ENCODE measurements at regions of chr5 and their contacts with region 1.

Region 1: DNA sequence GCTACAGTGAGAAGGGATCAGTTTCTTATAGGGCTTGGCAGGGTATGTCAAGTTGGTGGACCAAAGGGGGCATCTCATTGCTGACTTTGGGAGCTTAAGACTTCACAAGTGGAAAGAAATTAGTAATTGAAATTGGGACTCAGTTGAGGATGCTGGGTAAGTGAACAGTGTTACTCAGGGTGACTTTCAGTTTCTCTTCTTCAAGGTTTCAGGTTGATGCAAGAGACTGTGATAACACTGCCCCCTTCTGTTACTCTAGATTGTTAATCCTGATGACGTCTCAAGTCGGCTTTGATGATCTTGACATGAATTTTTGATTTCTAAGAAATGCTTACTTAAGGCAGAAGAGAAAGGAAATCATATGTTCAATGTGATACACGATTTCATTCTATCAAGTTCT is 21.3 kb downstream of the KCTD16 start:
- DNase-seq: peak; percentile 50
- H3K4me3 Mint-ChIP-seq: no peak overlapping the region
- H3K27ac Mint-ChIP-seq: no peak overlapping the region
- H3K4me1 Mint-ChIP-seq: peaks cover 30% of the 10 kb centered on the region
- H3K27me3 Mint-ChIP-seq: no peaks in the 10 kb centered on the region

Region 2: DNA sequence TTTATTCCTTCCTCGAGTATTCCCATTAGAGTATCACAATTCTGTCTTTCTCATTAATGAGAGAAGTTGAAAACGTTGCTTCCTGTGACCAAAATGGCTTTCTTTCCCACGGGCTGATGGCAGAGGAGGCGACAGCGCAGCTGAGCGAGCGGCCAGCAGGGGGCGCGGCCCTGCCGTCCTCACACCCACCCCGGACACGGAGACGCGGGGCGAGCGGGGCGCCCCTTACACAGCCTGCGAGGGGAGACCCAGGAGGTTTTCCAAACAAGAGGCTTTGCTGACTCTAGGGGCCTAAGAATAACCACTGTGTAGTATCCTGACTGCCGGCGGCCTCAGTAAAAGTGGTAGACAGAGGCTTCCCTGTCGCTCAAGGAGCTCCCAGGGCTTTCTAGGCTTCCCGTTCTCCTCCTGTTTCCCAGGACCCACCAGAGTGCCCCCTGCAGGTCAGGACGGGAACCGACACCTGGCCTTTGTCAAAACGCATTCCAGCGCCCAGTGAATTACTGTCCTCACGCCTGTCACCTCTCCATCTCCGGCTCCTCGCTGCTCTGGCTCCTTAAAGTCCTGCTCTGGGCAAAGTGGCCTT is 1478.8 kb before region 1 on chr5:
- CTCF ChIA-PET with region 1: no interaction called
- intact Hi-C with region 1: loop called (anchors 10 kb)
- DNase-seq: peak; percentile 87
- H3K4me3 Mint-ChIP-seq: peak overlapping the region; percentile 71
- H3K27ac Mint-ChIP-seq: peak overlapping the region; percentile 3
- H3K4me1 Mint-ChIP-seq: peaks cover 3% of the 10 kb centered on the region
- H3K27me3 Mint-ChIP-seq: peaks cover 3% of the 10 kb centered on the region

Region 3: DNA sequence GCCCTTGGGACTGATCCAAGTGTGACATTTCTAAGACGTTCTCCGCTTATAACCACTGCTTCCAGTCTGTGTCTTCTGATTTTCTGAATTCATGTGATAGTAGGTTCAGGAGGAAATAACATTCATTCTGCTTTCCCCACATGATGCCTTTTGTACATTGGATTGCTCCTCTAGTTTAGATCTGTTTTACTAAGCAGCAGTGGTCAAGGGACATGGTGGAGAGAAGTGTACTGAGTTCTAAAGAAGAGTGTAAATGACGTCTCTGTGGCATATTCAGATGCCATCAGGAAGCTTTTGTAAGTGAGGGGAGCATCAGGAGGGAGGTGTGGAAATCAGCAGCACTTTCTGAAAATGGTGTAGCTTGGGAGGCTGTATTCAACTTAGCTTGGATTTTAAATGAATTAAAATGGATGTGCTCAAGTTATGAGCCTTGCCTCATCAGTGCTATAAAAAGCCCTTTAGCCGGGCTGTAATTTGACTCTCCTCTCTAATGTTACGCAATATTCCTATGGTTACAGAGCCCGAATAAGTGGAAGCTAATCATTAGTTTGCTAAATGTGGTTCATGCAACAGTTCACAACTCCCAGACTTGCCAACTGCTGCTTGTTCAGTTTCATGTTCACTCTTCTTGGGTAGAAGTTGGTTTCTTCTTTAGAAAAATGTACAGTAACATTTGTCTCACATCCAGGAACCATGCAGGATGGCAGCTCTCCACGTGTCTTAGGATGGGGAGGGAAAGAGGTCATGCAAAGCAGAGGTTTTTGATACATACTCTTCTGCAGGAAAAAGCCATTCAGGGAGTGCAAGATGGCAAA is 1140.5 kb before region 1 on chr5:
- CTCF ChIA-PET with region 1: no interaction called
- intact Hi-C with region 1: loop called (anchors 2 kb)
- DNase-seq: no peak
- H3K4me3 Mint-ChIP-seq: no peak overlapping the region
- H3K27ac Mint-ChIP-seq: no peak overlapping the region
- H3K4me1 Mint-ChIP-seq: peaks cover 67% of the 10 kb centered on the region
- H3K27me3 Mint-ChIP-seq: no peaks in the 10 kb centered on the region

Region 4: DNA sequence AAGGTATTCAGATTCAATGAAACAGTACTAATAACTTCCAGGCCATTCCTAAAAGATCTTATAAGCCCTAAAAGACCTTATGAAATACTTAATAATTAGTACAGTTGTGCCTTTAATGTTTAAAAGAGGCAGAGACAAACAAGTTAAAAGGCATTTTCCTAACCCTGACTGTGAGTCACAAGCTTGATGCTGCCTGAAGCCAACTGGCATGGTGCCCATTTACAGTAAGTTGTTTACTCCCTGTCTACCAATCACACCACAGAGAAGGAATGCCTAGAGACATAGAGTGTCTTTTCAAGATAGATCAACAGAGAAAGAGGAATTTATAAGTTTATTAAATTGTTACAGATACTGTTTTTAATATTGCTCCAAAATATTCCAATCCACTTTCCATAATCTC is 836.3 kb before region 1 on chr5:
- CTCF ChIA-PET with region 1: no interaction called
- intact Hi-C with region 1: loop called (anchors 5 kb)
- DNase-seq: peak; percentile 60
- H3K4me3 Mint-ChIP-seq: no peak overlapping the region
- H3K27ac Mint-ChIP-seq: no peak overlapping the region
- H3K4me1 Mint-ChIP-seq: peaks cover 71% of the 10 kb centered on the region
- H3K27me3 Mint-ChIP-seq: no peaks in the 10 kb centered on the region

Region 5: GRCh38 chr5:143605403-143606005 is 586.5 kb before region 1 on chr5:
- CTCF ChIA-PET with region 1: no interaction called
- intact Hi-C with region 1: loop called (anchors 1 kb)
- DNase-seq: peak; percentile 57
- H3K4me3 Mint-ChIP-seq: no peak overlapping the region
- H3K27ac Mint-ChIP-seq: peak overlapping the region; percentile 36
- H3K4me1 Mint-ChIP-seq: peaks cover 20% of the 10 kb centered on the region
- H3K27me3 Mint-ChIP-seq: peaks cover 19% of the 10 kb centered on the region

Region 6: GRCh38 chr5:143923634-143924255 is 268.3 kb before region 1 on chr5:
- CTCF ChIA-PET with region 1: no interaction called
- intact Hi-C with region 1: loop called (anchors 2 kb)
- DNase-seq: no peak
- H3K4me3 Mint-ChIP-seq: no peak overlapping the region
- H3K27ac Mint-ChIP-seq: no peak overlapping the region
- H3K4me1 Mint-ChIP-seq: peaks cover 10% of the 10 kb centered on the region
- H3K27me3 Mint-ChIP-seq: peaks cover 2% of the 10 kb centered on the region

Region 7: DNA sequence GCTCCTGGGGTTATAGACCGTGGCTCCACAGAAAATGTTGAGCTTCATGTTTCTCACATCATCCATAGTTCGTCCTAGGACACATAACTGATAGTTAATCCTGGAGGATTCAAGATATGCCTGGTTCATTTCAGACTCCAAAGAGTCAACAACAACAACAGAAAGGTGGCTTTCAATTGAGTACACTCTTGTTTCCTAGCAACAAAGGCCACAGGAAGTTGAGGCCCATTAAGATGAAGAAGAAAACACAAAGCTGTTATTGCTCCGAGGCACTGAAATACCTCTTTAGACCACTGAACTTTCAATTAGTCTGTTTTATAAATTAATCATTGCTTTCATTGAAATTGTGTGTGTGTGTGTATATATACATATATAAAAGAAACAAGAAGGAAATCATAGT is 176.0 kb before region 1 on chr5:
- CTCF ChIA-PET with region 1: no interaction called
- intact Hi-C with region 1: no loop called
- DNase-seq: no peak
- H3K4me3 Mint-ChIP-seq: no peak overlapping the region
- H3K27ac Mint-ChIP-seq: no peak overlapping the region
- H3K4me1 Mint-ChIP-seq: no peaks in the 10 kb centered on the region
- H3K27me3 Mint-ChIP-seq: no peaks in the 10 kb centered on the region

Region 8: DNA sequence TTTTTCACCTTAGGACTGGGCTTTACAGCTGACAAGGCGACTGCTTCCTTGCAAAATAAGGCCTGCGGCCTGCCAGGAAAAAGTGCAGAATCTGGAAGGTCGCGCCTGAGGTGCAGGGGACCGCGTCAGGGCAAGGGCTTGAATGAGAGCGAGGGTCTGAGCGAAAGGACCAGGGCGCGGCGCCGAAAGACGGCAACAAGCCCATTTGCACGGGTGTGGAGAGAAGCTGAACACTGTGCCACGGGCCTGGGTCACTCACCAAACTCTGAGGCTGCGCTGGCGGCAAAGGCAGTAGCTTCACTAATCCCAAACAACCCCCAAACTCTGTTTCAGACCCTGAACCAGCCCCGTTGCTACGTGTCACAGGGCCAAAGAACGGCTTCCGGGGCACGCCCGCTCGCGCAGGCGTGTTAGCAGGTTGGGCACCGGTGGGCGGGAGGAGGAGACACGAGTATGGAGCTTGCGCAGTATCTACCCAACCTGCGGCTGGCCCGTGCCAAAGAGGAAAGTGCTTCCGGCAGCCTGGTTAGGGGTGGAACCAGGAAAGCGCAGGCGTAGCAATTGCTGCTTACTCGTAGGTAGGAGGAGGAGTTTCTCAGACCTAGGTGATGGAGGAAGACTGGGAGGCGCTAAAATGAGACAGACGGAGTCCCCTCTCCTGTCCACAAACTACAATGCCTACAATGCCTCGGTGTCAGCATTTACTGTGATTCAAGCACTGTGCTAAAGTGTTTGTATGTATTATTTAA is 21.5 kb before region 1 on chr5 and contains the starts of genes KCTD16 and YIPF5:
- CTCF ChIA-PET with region 1: interaction called, 40 read pairs
- intact Hi-C with region 1: loop called (anchors 1 kb)
- DNase-seq: peak; percentile 98
- H3K4me3 Mint-ChIP-seq: peak within 1 kb of the TSS; percentile 91
- H3K27ac Mint-ChIP-seq: peak within 1 kb of the TSS; percentile 60
- H3K4me1 Mint-ChIP-seq: peaks cover 39% of the 10 kb centered on the region
- H3K27me3 Mint-ChIP-seq: no peaks in the 10 kb centered on the region
- total RNA-seq, gene KCTD16: 0.27 to 0.29 TPM
- total RNA-seq, gene YIPF5: 31.2 to 33.3 TPM

Region 9: DNA sequence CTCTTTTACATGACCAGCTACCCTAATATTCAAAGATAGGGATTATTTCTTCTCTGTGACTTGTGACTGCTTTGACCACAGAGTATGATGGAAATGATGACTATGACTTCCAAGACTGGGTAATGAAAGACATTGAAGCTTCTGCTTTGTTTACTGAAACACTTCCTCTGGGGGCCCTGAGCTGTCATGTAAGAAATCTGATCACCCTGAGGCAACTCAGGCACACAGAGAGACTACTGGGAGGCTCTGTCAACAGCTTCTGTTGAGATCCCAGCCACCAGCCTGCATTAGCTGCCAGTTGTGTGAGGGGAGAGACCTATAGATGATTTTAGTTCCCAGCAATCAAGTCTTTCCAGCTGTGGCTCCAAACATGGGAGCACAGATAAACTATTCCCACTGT is 55.1 kb after region 1 on chr5:
- CTCF ChIA-PET with region 1: no interaction called
- intact Hi-C with region 1: no loop called
- DNase-seq: no peak
- H3K4me3 Mint-ChIP-seq: no peak overlapping the region
- H3K27ac Mint-ChIP-seq: no peak overlapping the region
- H3K4me1 Mint-ChIP-seq: no peaks in the 10 kb centered on the region
- H3K27me3 Mint-ChIP-seq: peaks cover 21% of the 10 kb centered on the region

Region 10: GRCh38 chr5:144284931-144285502 is 93.0 kb after region 1 on chr5:
- CTCF ChIA-PET with region 1: no interaction called
- intact Hi-C with region 1: no loop called
- DNase-seq: no peak
- H3K4me3 Mint-ChIP-seq: no peak overlapping the region
- H3K27ac Mint-ChIP-seq: no peak overlapping the region
- H3K4me1 Mint-ChIP-seq: no peaks in the 10 kb centered on the region
- H3K27me3 Mint-ChIP-seq: peaks cover 5% of the 10 kb centered on the region

Measured in activated naive CD4-positive, alpha-beta T cell treated with anti-CD3 and anti-CD28 coated beads for 36 hours (primary cell).